ENCODE measurements at regions of chr3 and their contacts with region 1.

Region 1: DNA sequence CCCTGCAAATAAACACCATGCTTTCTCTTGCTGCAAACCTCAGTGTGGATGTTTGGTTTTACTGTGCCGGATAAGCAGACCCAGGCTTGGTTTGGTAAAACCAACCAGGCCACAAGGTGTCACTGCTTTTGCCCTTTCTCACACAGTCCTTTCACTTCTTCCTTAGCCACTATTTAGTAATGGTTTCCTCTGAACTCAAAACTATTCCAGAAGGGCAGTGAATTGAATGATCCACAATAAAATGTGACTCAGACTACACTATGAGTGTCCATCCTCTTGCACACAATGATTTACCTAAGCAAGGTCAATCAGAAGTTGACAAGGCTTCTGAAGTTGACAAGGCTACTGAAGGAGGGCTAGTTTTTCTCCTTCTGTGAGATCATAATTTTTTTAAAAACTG is 552.4 kb upstream of the CCDC54 start:
- DNase-seq: no peak
- ATAC-seq: peak; percentile 64 to 77
- H3K4me3 ChIP-seq: no peak overlapping the region
- H3K27ac ChIP-seq: no peak overlapping the region
- H3K4me1 ChIP-seq: no peaks in the 10 kb centered on the region
- H3K27me3 ChIP-seq: no peaks in the 10 kb centered on the region

Region 2: GRCh38 chr3:107064445-107065060 is 239.7 kb after region 1 on chr3:
- intact Hi-C with region 1: loop called (anchors 5 to 10 kb)
- DNase-seq: peak in 2 of 3 donors; percentile 22 to 61
- ATAC-seq: peak; percentile 82 to 90
- H3K4me3 ChIP-seq: no peak overlapping the region
- H3K27ac ChIP-seq: no peak overlapping the region
- H3K4me1 ChIP-seq: peaks cover 4% of the 10 kb centered on the region
- H3K27me3 ChIP-seq: no peaks in the 10 kb centered on the region